ENCODE measurements at regions of chr2 and their contacts with region 1.

Region 1: DNA sequence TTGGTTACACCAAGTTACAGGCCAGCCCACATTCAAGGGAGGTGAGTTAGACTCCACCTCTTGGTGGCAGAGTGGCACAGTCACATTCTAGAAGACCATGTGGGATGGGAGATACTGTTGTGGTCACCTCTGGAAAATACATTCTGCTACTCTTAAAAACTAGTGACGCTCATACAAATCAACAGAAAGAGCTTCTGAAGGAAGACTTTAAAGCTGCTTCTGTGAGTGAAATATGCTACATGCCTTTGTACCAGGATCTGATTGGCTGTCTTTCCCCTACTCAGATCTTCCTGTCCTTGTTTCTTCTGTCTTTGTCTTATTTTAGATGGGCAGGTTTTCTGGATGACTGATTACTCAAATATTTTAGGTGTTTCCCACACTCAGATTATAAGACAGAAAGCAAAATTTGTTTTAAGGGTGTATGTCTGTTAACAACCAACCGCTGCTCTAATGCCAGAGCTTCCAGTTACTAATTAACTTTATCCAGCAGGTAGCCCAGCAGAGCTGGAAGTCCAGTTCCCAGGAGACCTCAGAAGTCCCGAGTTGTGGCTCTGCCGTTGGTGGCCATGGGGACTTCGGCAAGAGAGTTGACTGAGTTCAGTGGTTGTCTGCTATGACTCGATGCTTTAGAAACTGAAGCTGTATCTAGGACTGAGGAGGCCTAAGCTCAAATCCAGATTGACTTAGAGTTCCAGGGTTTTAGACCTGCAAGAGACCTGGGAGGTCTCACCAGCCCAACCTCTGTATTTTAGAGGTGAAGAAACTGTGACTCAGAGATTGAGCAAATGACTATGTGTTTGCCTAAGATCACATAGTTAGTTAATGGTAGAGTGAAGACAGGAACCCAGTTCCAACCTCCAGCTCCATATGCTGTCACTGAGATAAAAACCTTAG is 7.4 kb downstream of the IL1R2 start:
- DNase-seq: peak; percentile 73
- H3K4me3 Mint-ChIP-seq: peak overlapping the region; percentile 42
- H3K27ac Mint-ChIP-seq: peak overlapping the region; percentile 90
- H3K4me1 Mint-ChIP-seq: peaks cover 38% of the 10 kb centered on the region
- H3K27me3 Mint-ChIP-seq: no peaks in the 10 kb centered on the region

Region 2: DNA sequence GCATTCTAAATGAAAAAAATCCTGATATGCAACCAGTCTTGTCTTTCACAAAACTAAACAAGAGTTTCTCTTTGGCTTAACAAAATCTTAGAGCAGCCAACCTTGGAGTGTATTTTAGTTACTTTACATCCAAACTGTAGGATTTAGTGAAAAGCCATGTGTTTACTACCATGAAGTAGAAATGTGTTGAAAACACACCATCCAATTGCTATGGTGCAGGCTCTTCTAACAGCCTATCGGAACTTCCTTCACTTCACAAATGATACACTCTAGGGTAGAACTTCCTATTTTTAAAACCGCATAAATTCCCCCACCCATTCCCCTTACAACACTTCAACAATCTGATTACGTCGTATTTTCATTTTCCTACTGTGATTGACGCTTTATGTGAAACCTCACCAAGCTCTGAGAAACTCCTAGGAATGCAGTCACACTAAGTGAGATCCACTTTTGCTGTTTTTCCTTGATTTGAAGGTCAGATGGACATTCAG is 376.1 kb before region 1 on chr2:
- CTCF ChIA-PET with region 1: no interaction called
- intact Hi-C with region 1: loop called (anchors 1 kb)
- DNase-seq: peak; percentile 17
- H3K4me3 Mint-ChIP-seq: peak overlapping the region; percentile 17
- H3K27ac Mint-ChIP-seq: peak overlapping the region; percentile 90
- H3K4me1 Mint-ChIP-seq: peaks cover 39% of the 10 kb centered on the region
- H3K27me3 Mint-ChIP-seq: no peaks in the 10 kb centered on the region

Region 3: GRCh38 chr2:101883863-101884262 is 115.3 kb before region 1 on chr2:
- CTCF ChIA-PET with region 1: interaction called, 14 read pairs
- intact Hi-C with region 1: loop called (anchors 2 kb)
- DNase-seq: peak; percentile 74
- H3K4me3 Mint-ChIP-seq: no peak overlapping the region
- H3K27ac Mint-ChIP-seq: peak overlapping the region; percentile 61
- H3K4me1 Mint-ChIP-seq: peaks cover 17% of the 10 kb centered on the region
- H3K27me3 Mint-ChIP-seq: no peaks in the 10 kb centered on the region

Region 4: DNA sequence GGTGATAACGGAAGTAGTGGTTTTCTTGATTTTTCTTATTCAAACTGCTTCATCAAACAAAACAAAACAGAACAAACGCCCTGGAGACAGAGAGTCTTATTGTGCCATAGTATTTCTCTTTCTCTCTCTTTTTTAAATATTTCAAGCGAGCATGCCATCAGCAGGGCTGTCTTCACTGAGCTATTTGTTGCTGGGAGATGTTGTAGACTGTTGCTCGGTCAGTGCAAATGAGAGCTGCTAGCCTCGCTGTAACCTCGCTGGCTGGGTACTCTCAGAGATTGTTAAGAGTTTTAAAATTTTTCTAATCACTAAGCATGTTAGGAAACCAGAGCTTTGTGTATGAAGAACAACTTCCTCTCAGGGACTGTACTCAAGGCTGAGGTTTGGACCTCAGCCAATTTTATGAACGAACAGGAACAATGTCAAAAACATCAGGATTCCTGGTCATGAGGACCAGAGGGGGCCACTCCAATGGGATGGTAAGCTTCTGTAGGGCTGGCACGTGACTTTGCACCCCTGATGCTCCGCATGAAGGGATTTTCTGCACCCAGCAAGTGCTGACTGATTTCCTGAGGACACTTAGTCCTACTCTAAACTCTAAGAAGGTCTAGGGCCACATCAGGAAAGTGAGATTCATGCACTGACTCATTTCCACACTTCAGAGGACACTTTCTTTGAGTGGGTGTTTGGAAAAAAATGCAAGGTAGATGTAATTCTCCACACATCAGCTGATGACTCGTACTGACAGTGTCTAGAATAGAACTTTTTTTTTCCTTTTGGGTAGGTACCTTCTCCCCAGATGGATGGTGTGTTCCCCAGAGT is 83.6 kb after region 1 on chr2:
- CTCF ChIA-PET with region 1: interaction called, 4 read pairs
- intact Hi-C with region 1: loop called (anchors 1 kb)
- DNase-seq: peak; percentile 79
- H3K4me3 Mint-ChIP-seq: peak overlapping the region; percentile 30
- H3K27ac Mint-ChIP-seq: peak overlapping the region; percentile 91
- H3K4me1 Mint-ChIP-seq: peaks cover 60% of the 10 kb centered on the region
- H3K27me3 Mint-ChIP-seq: no peaks in the 10 kb centered on the region

Region 5: GRCh38 chr2:102166189-102166845 is 167.2 kb after region 1 on chr2:
- CTCF ChIA-PET with region 1: interaction called, 10 read pairs
- intact Hi-C with region 1: no loop called
- DNase-seq: peak; percentile 57
- H3K4me3 Mint-ChIP-seq: no peak overlapping the region
- H3K27ac Mint-ChIP-seq: no peak overlapping the region
- H3K4me1 Mint-ChIP-seq: peaks cover 9% of the 10 kb centered on the region
- H3K27me3 Mint-ChIP-seq: no peaks in the 10 kb centered on the region

Region 6: GRCh38 chr2:102418421-102418961 is 419.3 kb after region 1 on chr2:
- CTCF ChIA-PET with region 1: no interaction called
- intact Hi-C with region 1: loop called (anchors 1 kb)
- DNase-seq: no peak
- H3K4me3 Mint-ChIP-seq: peak overlapping the region; percentile 75
- H3K27ac Mint-ChIP-seq: peak overlapping the region; percentile 92
- H3K4me1 Mint-ChIP-seq: peaks cover 57% of the 10 kb centered on the region
- H3K27me3 Mint-ChIP-seq: no peaks in the 10 kb centered on the region